Right ventricle myocardium inferior (tissue), 1 donor: ENCODE measurements at regions of chr7 and their contacts with region 1.

Region 1: DNA sequence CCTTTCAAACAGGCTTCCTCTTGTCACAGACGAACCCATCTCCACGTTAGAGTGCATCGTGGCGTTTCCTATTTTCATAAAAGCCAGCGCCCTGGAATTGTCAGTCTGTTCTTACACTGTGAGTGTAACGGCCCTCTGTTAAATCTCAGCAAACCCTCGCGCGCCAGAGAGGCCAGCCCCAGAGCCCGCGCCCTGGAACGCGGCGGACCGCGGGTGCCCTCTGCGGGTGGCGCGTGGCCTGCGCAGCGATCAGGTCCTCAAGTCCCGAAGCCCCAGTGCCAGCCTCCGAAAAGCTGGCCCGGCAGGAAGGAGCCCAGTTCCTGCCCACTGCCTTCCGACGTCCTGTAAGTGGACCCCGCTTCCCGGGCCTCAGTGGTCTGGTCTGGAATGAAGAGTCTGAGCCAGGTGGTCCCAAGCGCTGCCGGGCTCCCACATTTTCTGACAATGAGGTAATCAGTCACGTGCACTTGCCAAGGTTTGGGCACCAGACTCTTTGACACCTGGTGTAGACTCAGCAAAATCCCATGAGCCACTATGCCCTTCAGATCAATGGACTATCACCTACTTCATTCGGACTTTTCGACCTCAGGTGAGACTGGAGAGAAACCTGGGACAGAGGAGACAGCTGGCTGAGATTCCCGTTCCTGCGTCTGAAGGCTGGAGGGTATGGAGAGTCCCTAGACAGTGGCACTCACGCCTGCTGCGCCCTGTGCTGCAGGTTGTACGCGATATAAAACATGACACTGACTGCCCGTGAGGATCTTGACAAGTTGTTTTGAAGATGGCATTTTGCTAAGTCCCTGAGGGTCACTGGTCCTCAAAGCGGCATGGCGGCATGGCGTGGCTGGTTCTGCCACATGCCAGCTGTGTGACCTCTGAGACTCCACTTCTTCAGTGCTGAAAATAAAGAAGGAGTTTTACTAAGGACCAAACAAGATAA is 109.4 kb upstream of the LANCL2 start:
- DNase-seq: peak; percentile 83
- ATAC-seq: peak; percentile 95

Region 2: GRCh38 chr7:54773472-54774399 is 482.0 kb before region 1 on chr7:
- intact Hi-C with region 1: loop called (anchors 1 kb)
- DNase-seq: peak; percentile 76
- ATAC-seq: peak; percentile 95

Region 3: GRCh38 chr7:54788664-54789063 is 467.1 kb before region 1 on chr7:
- intact Hi-C with region 1: loop called (anchors 2 kb)
- DNase-seq: no peak
- ATAC-seq: peak; percentile 79

Region 4: DNA sequence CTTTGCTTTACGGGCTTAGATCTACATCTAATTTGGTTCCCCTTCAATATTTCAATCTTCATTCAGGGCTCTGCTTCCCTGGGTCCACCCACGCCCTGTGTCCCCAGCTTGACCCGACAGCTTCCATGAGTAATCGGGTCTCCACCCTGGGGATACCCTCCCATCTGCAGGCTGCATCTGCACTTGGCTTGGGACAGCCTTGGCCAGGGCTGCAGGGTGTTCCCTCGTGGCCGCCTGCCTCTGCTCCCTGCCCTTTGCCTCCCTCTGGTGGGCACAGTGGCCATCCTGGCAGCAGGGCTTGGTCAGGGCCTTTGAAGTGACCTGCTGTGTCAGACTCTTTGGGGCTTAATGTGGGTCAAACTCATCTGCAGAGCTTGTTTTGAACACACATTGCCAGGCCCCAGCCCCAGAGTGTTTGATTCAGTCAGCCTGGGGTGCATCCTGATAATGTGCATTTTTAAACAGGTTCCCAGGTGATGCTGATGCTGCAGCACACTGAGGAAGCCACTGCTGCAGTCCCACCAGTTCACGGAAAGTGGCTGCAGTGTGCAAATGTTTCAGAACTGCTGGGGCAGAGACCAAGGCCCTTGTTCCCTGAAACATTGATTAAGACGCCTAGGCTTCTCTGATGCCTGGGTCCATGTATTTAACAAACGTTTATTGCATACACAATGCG is 416.1 kb before region 1 on chr7:
- intact Hi-C with region 1: loop called (anchors 2 kb)
- DNase-seq: peak; percentile 85
- ATAC-seq: peak; percentile 94

Region 5: DNA sequence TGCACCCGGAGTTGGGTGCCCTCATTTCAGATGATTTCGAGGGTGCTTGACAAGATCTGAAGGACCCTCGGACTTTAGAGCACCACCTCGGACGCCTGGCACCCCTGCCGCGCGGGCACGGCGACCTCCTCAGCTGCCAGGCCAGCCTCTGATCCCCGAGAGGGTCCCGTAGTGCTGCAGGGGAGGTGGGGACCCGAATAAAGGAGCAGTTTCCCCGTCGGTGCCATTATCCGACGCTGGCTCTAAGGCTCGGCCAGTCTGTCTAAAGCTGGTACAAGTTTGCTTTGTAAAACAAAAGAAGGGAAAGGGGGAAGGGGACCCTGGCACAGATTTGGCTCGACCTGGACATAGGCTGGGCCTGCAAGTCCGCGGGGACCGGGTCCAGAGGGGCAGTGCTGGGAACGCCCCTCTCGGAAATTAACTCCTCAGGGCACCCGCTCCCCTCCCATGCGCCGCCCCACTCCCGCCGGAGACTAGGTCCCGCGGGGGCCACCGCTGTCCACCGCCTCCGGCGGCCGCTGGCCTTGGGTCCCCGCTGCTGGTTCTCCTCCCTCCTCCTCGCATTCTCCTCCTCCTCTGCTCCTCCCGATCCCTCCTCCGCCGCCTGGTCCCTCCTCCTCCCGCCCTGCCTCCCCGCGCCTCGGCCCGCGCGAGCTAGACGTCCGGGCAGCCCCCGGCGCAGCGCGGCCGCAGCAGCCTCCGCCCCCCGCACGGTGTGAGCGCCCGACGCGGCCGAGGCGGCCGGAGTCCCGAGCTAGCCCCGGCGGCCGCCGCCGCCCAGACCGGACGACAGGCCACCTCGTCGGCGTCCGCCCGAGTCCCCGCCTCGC is 237.2 kb before region 1 on chr7 and contains the start of gene EGFR:
- intact Hi-C with region 1: loop called (anchors 2 kb)
- DNase-seq: peak; percentile 84
- ATAC-seq: peak; percentile 86
- total RNA-seq, gene EGFR: 11.4 TPM

Region 6: GRCh38 chr7:55053651-55054571 is 201.9 kb before region 1 on chr7:
- intact Hi-C with region 1: loop called (anchors 10 kb)
- DNase-seq: no peak
- ATAC-seq: no peak

Region 7: DNA sequence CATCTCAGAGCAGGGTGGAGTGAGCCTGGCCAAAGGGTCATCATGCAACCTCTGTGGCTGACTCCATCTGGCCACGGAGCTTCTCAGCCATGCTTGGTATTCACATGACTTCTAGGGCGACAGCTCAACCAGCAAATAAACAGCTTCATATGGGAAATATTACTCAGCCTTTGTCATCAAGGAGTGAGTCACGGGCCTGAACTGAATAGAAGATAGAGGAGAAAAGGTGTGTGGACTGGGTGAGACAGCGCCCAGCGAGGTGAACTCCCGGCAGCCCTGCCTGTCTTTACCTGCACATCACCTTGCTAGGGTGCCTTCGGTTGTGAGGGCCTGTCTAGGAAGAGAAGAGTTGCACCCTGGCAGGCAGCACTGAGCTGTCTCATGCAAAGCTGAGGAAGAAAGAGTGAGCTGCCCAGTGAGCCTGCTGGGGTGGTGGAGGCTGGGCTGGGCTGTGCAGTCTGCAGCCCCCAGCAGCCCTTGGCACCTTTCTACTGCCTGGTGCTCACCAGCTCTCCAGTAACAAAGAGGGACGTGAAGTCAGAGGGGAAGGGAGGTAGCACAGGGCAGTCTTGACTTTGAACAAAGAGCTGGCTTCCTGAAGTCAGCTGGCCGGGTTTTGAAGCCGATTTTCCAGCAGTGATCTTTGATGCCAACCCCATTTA is 122.7 kb before region 1 on chr7:
- intact Hi-C with region 1: loop called (anchors 10 kb)
- DNase-seq: no peak
- ATAC-seq: no peak